Heart left ventricle (tissue), 16 donors: ENCODE measurements at regions of chr11 and their contacts with region 1.

Region 1: DNA sequence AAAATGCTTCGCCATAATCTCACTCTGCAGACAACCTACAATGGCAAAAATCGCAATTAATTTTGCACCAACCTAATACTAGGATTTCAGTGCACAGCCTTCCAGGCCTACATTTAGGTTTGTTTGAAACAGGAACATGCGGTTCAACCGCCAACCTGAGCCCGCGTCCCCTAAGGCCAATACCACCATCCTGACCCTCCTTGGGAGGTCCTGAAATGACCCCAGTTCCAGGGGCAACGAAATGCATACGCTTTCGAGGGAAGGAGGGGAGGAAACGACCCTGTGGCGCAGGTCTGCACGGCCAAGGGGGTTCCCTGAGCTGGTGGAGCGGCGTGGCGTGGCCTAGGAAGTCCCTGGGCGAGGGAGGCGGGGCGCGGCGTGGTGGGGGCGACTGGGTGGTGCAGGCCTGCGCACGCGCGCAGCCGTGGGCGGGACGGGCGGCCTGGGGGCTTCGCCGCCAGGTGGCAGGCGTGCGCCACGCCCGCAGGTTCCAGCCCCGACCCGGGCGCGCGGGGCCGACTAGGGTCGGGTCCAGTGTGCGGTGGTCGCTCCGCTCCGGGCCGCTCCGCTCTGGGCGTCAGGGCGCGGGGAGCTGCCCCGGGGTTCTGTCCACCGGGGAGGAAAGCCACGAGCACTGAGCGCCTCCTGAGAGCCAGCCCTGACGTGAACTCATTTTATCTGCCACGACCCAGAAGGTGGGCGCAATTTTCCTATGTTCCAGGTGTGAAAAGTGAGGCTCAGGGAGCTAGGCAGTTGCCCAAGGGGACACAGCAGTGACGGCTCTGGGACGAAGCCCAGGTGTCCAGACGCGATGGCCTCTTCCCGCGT is 94.1 kb downstream of the SWAP70 start:
- DNase-seq: peak; percentile 89 to 95 (median 91)
- ATAC-seq: peak; percentile 34 to 75 (median 64)
- H3K4me3 ChIP-seq: peak overlapping the region; percentile 34 to 90 (median 74)
- H3K27ac ChIP-seq: peak overlapping the region; percentile 77 to 99 (median 92)
- H3K4me1 ChIP-seq: peaks cover 4 to 60% (median 38%) of the 10 kb centered on the region in 12 donors
- H3K27me3 ChIP-seq: no peaks in the 10 kb centered on the region
- CTCF ChIP-seq: peak; percentile 43 to 98 (median 88)
- POLR2A ChIP-seq: peak in 1 of 2 donors; percentile 42

Region 2: GRCh38 chr11:9573052-9573774 is 184.8 kb before region 1 on chr11 and contains the start of gene WEE1:
- intact Hi-C with region 1: loop called in 1 of 10 experiments (anchors 5 kb)
- DNase-seq: peak; percentile 98 to 100 (median 98)
- ATAC-seq: peak; percentile 86 to 97 (median 94)
- H3K4me3 ChIP-seq: peak within 1 kb of the TSS; percentile 42 to 90 (median 78)
- H3K27ac ChIP-seq: peak within 1 kb of the TSS; percentile 86 to 98 (median 96)
- H3K4me1 ChIP-seq: peaks cover 0 to 52% (median 20%) of the 10 kb centered on the region in 12 donors
- H3K27me3 ChIP-seq: no peaks in the 10 kb centered on the region
- CTCF ChIP-seq: no peak
- POLR2A ChIP-seq: peak in 1 of 2 donors; percentile 78
- total RNA-seq, gene WEE1: 33.0 to 89.2 (median 68.7) TPM

Region 3: GRCh38 chr11:9815486-9816136 is 57.6 kb after region 1 on chr11:
- intact Hi-C with region 1: loop called in 1 of 10 experiments (anchors 10 kb)
- DNase-seq: no peak
- ATAC-seq: peak in 2 of 4 donors; percentile 8 to 54
- H3K4me3 ChIP-seq: no peak overlapping the region
- H3K27ac ChIP-seq: no peak overlapping the region
- H3K4me1 ChIP-seq: peaks cover 0 to 13% (median 5%) of the 10 kb centered on the region in 12 donors
- H3K27me3 ChIP-seq: no peaks in the 10 kb centered on the region
- CTCF ChIP-seq: no peak
- POLR2A ChIP-seq: no peak

Region 4: GRCh38 chr11:9861860-9862725 is 104.1 kb after region 1 on chr11:
- intact Hi-C with region 1: loop called in 3 of 10 experiments (anchors 5 kb)
- DNase-seq: peak in 4 of 5 donors; percentile 31 to 48 (median 38)
- ATAC-seq: peak in 3 of 4 donors; percentile 82 to 85 (median 84)
- H3K4me3 ChIP-seq: no peak overlapping the region
- H3K27ac ChIP-seq: no peak overlapping the region
- H3K4me1 ChIP-seq: peaks cover 0 to 17% (median 5%) of the 10 kb centered on the region in 12 donors
- H3K27me3 ChIP-seq: no peaks in the 10 kb centered on the region
- CTCF ChIP-seq: peak; percentile 54 to 79 (median 64)
- POLR2A ChIP-seq: no peak

Region 5: DNA sequence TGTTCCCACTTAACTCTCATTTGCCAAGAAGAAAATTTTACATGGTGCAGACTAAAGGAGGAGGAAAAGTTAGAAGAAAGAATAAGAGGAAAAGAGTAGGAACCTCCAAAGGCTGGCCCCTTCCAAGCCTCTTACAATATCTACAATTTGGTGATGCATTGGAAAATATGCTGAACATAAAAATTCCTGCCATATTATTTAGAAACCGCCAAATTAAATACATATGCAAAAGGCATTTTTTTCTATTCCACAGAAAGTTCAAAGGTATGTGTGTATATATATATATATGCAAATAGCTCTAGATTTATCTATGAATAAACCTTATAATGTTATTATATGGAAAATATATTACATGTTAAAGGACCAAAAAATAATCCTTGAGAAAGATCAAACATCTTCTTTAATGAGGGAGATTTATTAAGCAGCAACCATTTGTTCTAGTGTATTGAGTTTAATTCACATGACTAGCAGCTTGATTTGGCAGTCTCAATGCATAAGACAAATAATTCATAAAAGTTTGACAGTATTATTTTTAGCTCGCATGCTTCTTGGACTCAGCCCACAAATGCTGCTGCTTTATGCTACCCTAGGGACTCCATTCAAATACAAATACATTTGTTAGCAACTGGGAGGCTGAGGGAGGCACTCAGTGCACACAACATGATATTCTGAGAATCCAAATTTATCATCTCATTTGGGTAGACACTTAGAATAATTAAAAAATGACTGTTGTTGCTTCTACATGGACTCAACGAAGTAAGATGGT is 351.1 kb after region 1 on chr11:
- intact Hi-C with region 1: loop called in 1 of 10 experiments (anchors 10 kb)
- DNase-seq: peak in 3 of 5 donors; percentile 22 to 42 (median 31)
- ATAC-seq: peak; percentile 62 to 88 (median 73)
- H3K4me3 ChIP-seq: no peak overlapping the region
- H3K27ac ChIP-seq: peak overlapping the region in 8 of 12 donors; percentile 19 to 58 (median 52)
- H3K4me1 ChIP-seq: peaks cover 0 to 41% (median 19%) of the 10 kb centered on the region in 12 donors
- H3K27me3 ChIP-seq: no peaks in the 10 kb centered on the region
- CTCF ChIP-seq: no peak
- POLR2A ChIP-seq: no peak

Region 6: GRCh38 chr11:10307442-10308207 is 549.6 kb after region 1 on chr11:
- intact Hi-C with region 1: loop called (anchors 1 to 5 kb)
- DNase-seq: peak; percentile 82 to 93 (median 88)
- ATAC-seq: peak; percentile 29 to 70 (median 69)
- H3K4me3 ChIP-seq: peak overlapping the region; percentile 16 to 88 (median 76)
- H3K27ac ChIP-seq: peak overlapping the region; percentile 4 to 90 (median 86)
- H3K4me1 ChIP-seq: peaks cover 0 to 72% (median 54%) of the 10 kb centered on the region in 12 donors
- H3K27me3 ChIP-seq: no peaks in the 10 kb centered on the region
- CTCF ChIP-seq: peak; percentile 95 to 100 (median 99)
- POLR2A ChIP-seq: peak in 1 of 2 donors; percentile 17

Region 7: GRCh38 chr11:10328314-10329090 is 570.5 kb after region 1 on chr11:
- intact Hi-C with region 1: loop called in 9 of 10 experiments (anchors 1 to 5 kb)
- DNase-seq: no peak
- ATAC-seq: peak; percentile 21 to 56 (median 46)
- H3K4me3 ChIP-seq: no peak overlapping the region
- H3K27ac ChIP-seq: peak overlapping the region in 3 of 12 donors; percentile 10 to 79 (median 72)
- H3K4me1 ChIP-seq: peaks cover 0 to 58% (median 26%) of the 10 kb centered on the region in 12 donors
- H3K27me3 ChIP-seq: no peaks in the 10 kb centered on the region
- CTCF ChIP-seq: no peak
- POLR2A ChIP-seq: no peak